Gastrocnemius medialis (tissue), 4 donors: ENCODE measurements at regions of chr11 and their contacts with region 1.

Region 1: GRCh38 chr11:3939211-3939610 is 83.7 kb downstream of the STIM1 start:
- DNase-seq: no peak
- ATAC-seq: no peak
- H3K4me3 ChIP-seq: no peak overlapping the region
- H3K27ac ChIP-seq: peak overlapping the region; percentile 35 to 86 (median 62)
- H3K4me1 ChIP-seq: peaks cover 93% of the 10 kb centered on the region in 2 donors
- H3K27me3 ChIP-seq: no peaks in the 10 kb centered on the region
- CTCF ChIP-seq: no peak
- POLR2A ChIP-seq: no peak

Region 2: GRCh38 chr11:3867209-3868091 is 71.8 kb before region 1 on chr11:
- in situ Hi-C with region 1: loop called in 1 of 4 experiments (anchors 10 kb)
- intact Hi-C with region 1: no loop called
- DNase-seq: peak; percentile 27 to 58
- ATAC-seq: peak; percentile 84 to 85
- H3K4me3 ChIP-seq: peak overlapping the region in 2 of 4 donors; percentile 5 to 22
- H3K27ac ChIP-seq: peak overlapping the region; percentile 83 to 100 (median 94)
- H3K4me1 ChIP-seq: peaks cover 77 to 82% of the 10 kb centered on the region in 2 donors
- H3K27me3 ChIP-seq: no peaks in the 10 kb centered on the region
- CTCF ChIP-seq: no peak
- POLR2A ChIP-seq: peak in 1 of 2 donors; percentile 21

Region 3: GRCh38 chr11:3950996-3951660 is 11.9 kb after region 1 on chr11:
- in situ Hi-C with region 1: no loop called
- intact Hi-C with region 1: no loop called
- DNase-seq: no peak
- ATAC-seq: no peak
- H3K4me3 ChIP-seq: no peak overlapping the region
- H3K27ac ChIP-seq: peak overlapping the region; percentile 81 to 92 (median 84)
- H3K4me1 ChIP-seq: peaks cover 81 to 85% of the 10 kb centered on the region in 2 donors
- H3K27me3 ChIP-seq: no peaks in the 10 kb centered on the region
- CTCF ChIP-seq: no peak
- POLR2A ChIP-seq: no peak

Region 4: DNA sequence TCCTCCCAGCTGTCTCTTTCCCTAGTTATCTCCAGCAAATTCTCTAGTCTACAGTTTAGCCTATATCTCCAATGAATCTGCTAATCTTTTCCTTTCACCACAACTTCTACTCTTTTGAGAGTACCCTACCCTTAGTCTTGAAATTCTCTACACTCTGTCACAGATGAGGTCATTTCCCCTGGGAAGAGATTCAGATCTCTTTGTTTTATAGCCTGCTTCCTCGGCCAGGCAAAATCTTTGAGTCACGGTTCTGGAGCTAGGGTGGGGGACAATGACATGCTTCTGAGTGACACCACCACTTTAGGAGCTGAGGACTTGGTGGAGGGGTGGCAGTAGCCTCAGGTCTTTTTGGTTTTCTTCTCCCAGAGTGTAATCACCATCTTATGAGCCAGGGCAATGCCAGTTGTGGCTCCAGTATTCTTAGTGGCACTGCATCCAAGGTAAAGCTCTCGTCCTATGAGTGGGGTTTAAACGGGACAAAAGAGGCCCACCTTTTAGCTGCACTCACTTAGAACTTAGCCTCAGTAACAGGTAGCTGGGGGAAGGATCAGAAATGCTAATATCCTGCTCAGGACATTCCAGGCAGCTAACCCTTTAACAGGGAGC is 56.8 kb after region 1 on chr11:
- in situ Hi-C with region 1: loop called in 1 of 4 experiments (anchors 10 kb)
- intact Hi-C with region 1: no loop called
- DNase-seq: no peak
- ATAC-seq: peak; percentile 41 to 47
- H3K4me3 ChIP-seq: no peak overlapping the region
- H3K27ac ChIP-seq: peak overlapping the region; percentile 18 to 59 (median 28)
- H3K4me1 ChIP-seq: peaks cover 26 to 34% of the 10 kb centered on the region in 2 donors
- H3K27me3 ChIP-seq: no peaks in the 10 kb centered on the region
- CTCF ChIP-seq: no peak
- POLR2A ChIP-seq: no peak